CD4-positive, alpha-beta memory T cell (primary cell): ENCODE measurements at regions of chr3 and their contacts with region 1.

Region 1: DNA sequence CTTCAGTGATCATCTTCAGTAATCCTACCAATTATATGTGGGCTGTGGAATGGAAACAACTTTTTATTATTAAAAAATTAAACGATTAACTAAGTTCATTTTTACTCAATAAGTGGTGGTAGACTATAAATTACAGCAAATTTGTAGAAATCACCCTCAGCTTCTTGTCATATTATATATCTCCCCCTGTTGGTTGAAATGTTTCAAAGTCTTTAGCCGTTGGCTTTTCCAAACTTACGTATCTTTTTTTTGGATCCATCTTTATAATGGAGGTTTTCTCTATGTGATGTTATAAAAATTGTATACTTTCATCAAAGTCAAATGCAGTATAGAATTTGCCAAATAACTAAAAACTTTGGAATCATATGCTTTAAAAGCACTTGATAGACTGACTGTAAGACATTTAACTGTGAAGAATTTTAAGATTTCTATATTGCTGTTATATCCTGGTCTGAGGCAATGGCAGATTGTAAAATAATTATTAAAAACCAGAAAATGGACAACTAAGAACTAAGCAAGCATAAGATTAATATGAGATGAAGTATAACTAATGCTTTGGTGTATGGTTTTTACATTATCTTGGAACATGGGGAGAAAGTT is 44.7 kb downstream of the ATP11B start:
- DNase-seq: peak in 4 of 5 donors; percentile 21 to 30 (median 26)
- H3K4me3 ChIP-seq: no peak overlapping the region
- H3K4me3 Mint-ChIP-seq: no peak overlapping the region
- H3K27ac ChIP-seq: no peak overlapping the region
- H3K27ac Mint-ChIP-seq: peak overlapping the region in 1 of 7 donors; percentile 25
- H3K4me1 ChIP-seq: no peaks in the 10 kb centered on the region
- H3K4me1 Mint-ChIP-seq: peaks cover 8 to 17% (median 10%) of the 10 kb centered on the region in 4 donors
- H3K27me3 ChIP-seq: no peaks in the 10 kb centered on the region
- H3K27me3 Mint-ChIP-seq: no peaks in the 10 kb centered on the region

Region 2: DNA sequence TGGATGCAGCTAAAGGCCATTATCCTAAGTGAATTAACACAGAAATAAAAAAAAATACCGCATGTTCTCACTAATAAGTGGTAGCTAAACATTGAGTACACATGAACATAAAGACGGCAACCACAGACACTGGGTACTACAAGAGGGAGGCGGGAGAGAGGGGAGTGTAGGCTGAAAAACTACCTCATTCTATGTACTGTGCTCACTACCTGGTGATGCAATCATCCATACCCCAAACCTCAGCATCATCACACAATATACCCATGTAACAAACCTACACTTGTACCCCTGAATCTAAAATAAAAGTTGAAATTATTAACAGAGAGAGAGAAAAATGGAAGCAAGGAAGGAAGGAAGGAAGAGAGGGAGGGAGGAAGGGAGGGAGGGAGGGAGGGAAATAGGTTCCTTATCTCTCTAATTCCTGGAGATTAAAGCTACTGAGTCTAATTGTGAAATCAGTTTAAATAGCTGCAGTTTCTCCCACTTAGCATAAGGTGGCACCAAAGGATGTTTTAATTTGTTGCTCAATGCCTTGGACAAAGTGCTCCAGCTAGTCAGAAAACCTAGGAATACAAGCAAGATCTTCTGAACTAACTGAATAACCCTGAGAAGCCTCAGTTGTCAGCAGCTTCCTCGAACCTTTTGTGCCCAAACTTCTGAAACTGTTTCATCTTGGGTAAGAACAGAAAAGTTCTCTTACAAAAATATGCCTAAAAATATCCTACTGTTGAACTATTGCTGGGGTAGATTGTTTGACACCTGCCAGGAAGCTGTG is 124.0 kb before region 1 on chr3:
- CTCF ChIA-PET with region 1: interaction called, 50 read pairs
- POLR2A ChIA-PET with region 1: interaction called, 5 read pairs
- intact Hi-C with region 1: loop called (anchors 1 kb)
- DNase-seq: peak in 4 of 5 donors; percentile 25 to 41 (median 28)
- H3K4me3 ChIP-seq: no peak overlapping the region
- H3K4me3 Mint-ChIP-seq: no peak overlapping the region
- H3K27ac ChIP-seq: no peak overlapping the region
- H3K27ac Mint-ChIP-seq: no peak overlapping the region
- H3K4me1 ChIP-seq: no peaks in the 10 kb centered on the region
- H3K4me1 Mint-ChIP-seq: peaks cover 0 to 2% (median under 1%) of the 10 kb centered on the region in 4 donors
- H3K27me3 ChIP-seq: no peaks in the 10 kb centered on the region
- H3K27me3 Mint-ChIP-seq: no peaks in the 10 kb centered on the region

Region 3: GRCh38 chr3:183754052-183754451 is 916.1 kb after region 1 on chr3:
- CTCF ChIA-PET with region 1: no interaction called
- POLR2A ChIA-PET with region 1: no interaction called
- intact Hi-C with region 1: no loop called
- DNase-seq: no peak
- H3K4me3 ChIP-seq: no peak overlapping the region
- H3K4me3 Mint-ChIP-seq: no peak overlapping the region
- H3K27ac ChIP-seq: no peak overlapping the region
- H3K27ac Mint-ChIP-seq: peak overlapping the region in 1 of 7 donors; percentile 31
- H3K4me1 ChIP-seq: no peaks in the 10 kb centered on the region
- H3K4me1 Mint-ChIP-seq: no peaks in the 10 kb centered on the region
- H3K27me3 ChIP-seq: no peaks in the 10 kb centered on the region
- H3K27me3 Mint-ChIP-seq: no peaks in the 10 kb centered on the region